ENCODE measurements at regions of chr2 and their contacts with region 1.

Region 1: GRCh38 chr2:39124000-39124745 is 3.3 kb upstream of the SOS1 start:
- DNase-seq: peak; percentile 89 to 98 (median 94)
- ATAC-seq: peak; percentile 74
- H3K4me3 ChIP-seq: peak overlapping the region; percentile 83
- H3K4me3 Mint-ChIP-seq: peak overlapping the region; percentile 96
- H3K27ac ChIP-seq: peak overlapping the region; percentile 88 to 89
- H3K27ac Mint-ChIP-seq: peak overlapping the region; percentile 99
- H3K4me1 ChIP-seq: peaks cover 50% of the 10 kb centered on the region
- H3K4me1 Mint-ChIP-seq: peaks cover 63% of the 10 kb centered on the region
- H3K27me3 ChIP-seq: no peaks in the 10 kb centered on the region
- H3K27me3 Mint-ChIP-seq: no peaks in the 10 kb centered on the region
- CTCF ChIP-seq: peak; percentile 67

Region 2: DNA sequence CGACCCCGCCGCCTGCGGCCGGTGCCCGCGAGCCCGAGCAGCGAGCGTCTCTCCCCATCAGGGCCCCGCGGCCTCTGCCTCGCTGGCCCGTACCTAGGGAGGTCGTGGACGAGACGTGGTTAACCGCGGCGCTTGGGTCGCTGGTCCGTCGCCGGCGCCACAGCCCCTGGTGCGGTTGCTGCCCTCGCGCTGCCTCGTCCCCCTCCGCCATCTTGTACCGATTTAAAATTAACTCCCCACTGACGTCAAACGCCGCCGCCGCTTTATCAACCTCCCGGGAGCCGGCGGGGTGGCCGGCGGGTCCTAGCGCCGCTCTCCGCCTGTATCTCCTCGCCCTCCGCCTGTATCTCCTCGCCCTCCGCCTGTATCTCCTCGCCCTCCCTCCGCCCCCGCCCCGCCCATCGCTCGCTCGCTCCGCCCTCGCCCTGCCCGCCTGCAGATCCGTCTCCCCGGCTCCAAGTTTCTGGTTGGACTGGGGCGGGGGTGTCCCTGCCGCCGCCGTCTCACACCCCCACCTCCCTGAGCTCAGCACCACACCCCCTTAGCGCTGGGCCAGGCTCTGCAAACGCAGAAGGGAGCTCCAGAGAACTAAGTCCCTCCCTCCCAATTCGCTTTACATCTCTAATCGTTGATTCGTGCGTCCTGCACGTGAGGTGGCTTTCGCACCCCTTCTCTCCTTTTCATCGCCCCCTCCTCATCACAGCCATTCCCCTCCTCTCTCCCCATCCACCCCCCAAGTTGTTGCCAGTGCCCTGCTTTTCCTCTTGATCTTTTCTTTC is 746.9 kb before region 1 on chr2 and contains the start of gene ATL2:
- CTCF ChIA-PET with region 1: no interaction called
- POLR2A ChIA-PET with region 1: no interaction called
- intact Hi-C with region 1: loop called in 1 of 2 experiments (anchors 10 kb)
- DNase-seq: peak; percentile 87 to 97 (median 91)
- ATAC-seq: peak; percentile 75
- H3K4me3 ChIP-seq: peak within 1 kb of the TSS; percentile 75
- H3K4me3 Mint-ChIP-seq: peak within 1 kb of the TSS; percentile 99
- H3K27ac ChIP-seq: peak within 1 kb of the TSS; percentile 59 to 75
- H3K27ac Mint-ChIP-seq: peak within 1 kb of the TSS; percentile 95
- H3K4me1 ChIP-seq: peaks cover 38% of the 10 kb centered on the region
- H3K4me1 Mint-ChIP-seq: peaks cover 83% of the 10 kb centered on the region
- H3K27me3 ChIP-seq: no peaks in the 10 kb centered on the region
- H3K27me3 Mint-ChIP-seq: no peaks in the 10 kb centered on the region
- CTCF ChIP-seq: no peak
- total RNA-seq, gene ATL2: 85.5 to 91.7 TPM

Region 3: GRCh38 chr2:39059366-39059952 is 64.7 kb before region 1 on chr2:
- CTCF ChIA-PET with region 1: interaction called, 3 read pairs
- POLR2A ChIA-PET with region 1: interaction called, 11 read pairs
- intact Hi-C with region 1: loop called (anchors 2 kb)
- DNase-seq: peak in 3 of 14 experiments; percentile 74 to 76 (median 74)
- ATAC-seq: peak; percentile 39
- H3K4me3 ChIP-seq: no peak overlapping the region
- H3K4me3 Mint-ChIP-seq: no peak overlapping the region
- H3K27ac ChIP-seq: no peak overlapping the region
- H3K27ac Mint-ChIP-seq: no peak overlapping the region
- H3K4me1 ChIP-seq: no peaks in the 10 kb centered on the region
- H3K4me1 Mint-ChIP-seq: no peaks in the 10 kb centered on the region
- H3K27me3 ChIP-seq: no peaks in the 10 kb centered on the region
- H3K27me3 Mint-ChIP-seq: no peaks in the 10 kb centered on the region
- CTCF ChIP-seq: peak; percentile 86

Region 4: GRCh38 chr2:39141331-39142271 is 17.4 kb after region 1 on chr2:
- CTCF ChIA-PET with region 1: interaction called, 5 read pairs
- POLR2A ChIA-PET with region 1: interaction called, 16 read pairs
- intact Hi-C with region 1: no loop called
- DNase-seq: peak in 3 of 14 experiments; percentile 52 to 60 (median 60)
- ATAC-seq: no peak
- H3K4me3 ChIP-seq: no peak overlapping the region
- H3K4me3 Mint-ChIP-seq: peak overlapping the region; percentile 25
- H3K27ac ChIP-seq: no peak overlapping the region
- H3K27ac Mint-ChIP-seq: peak overlapping the region; percentile 45
- H3K4me1 ChIP-seq: peaks cover 29% of the 10 kb centered on the region
- H3K4me1 Mint-ChIP-seq: peaks cover 37% of the 10 kb centered on the region
- H3K27me3 ChIP-seq: no peaks in the 10 kb centered on the region
- H3K27me3 Mint-ChIP-seq: no peaks in the 10 kb centered on the region
- CTCF ChIP-seq: no peak

Region 5: GRCh38 chr2:39227628-39228412 is 103.6 kb after region 1 on chr2:
- CTCF ChIA-PET with region 1: interaction called, 44 read pairs
- POLR2A ChIA-PET with region 1: interaction called, 79 read pairs
- intact Hi-C with region 1: loop called (anchors 1 kb)
- DNase-seq: peak; percentile 65 to 92 (median 80)
- ATAC-seq: peak; percentile 85
- H3K4me3 ChIP-seq: peak overlapping the region; percentile 31
- H3K4me3 Mint-ChIP-seq: peak overlapping the region; percentile 66
- H3K27ac ChIP-seq: no peak overlapping the region
- H3K27ac Mint-ChIP-seq: no peak overlapping the region
- H3K4me1 ChIP-seq: peaks cover 10% of the 10 kb centered on the region
- H3K4me1 Mint-ChIP-seq: peaks cover 22% of the 10 kb centered on the region
- H3K27me3 ChIP-seq: no peaks in the 10 kb centered on the region
- H3K27me3 Mint-ChIP-seq: no peaks in the 10 kb centered on the region
- CTCF ChIP-seq: peak; percentile 89

Region 6: DNA sequence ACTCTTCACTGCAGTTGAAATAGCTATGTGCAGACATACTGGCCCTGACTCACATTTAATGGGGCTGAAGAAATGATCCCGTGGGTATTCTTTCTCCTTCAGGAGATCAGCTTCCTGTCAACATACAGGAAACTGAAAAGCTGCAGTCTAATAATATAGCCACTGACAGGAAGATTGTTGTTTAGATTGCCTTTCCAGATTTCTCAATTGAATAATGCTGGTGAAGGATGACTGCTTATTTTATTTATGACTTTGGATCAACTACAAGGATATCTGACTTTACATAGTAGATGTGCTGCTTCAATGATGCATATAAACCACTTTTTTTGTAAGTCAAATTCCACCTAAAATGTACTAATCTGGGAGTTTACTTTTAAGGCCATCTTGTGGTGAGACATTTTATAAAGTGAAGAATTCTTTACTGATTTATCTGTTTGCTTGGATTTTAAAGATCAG is 406.3 kb after region 1 on chr2:
- CTCF ChIA-PET with region 1: no interaction called
- POLR2A ChIA-PET with region 1: no interaction called
- intact Hi-C with region 1: no loop called
- DNase-seq: no peak
- ATAC-seq: no peak
- H3K4me3 ChIP-seq: no peak overlapping the region
- H3K4me3 Mint-ChIP-seq: no peak overlapping the region
- H3K27ac ChIP-seq: no peak overlapping the region
- H3K27ac Mint-ChIP-seq: no peak overlapping the region
- H3K4me1 ChIP-seq: no peaks in the 10 kb centered on the region
- H3K4me1 Mint-ChIP-seq: no peaks in the 10 kb centered on the region
- H3K27me3 ChIP-seq: no peaks in the 10 kb centered on the region
- H3K27me3 Mint-ChIP-seq: no peaks in the 10 kb centered on the region
- CTCF ChIP-seq: no peak

Measured in CD4-positive, alpha-beta T cell (primary cell).